ENCODE measurements at regions of chr12 and their contacts with region 1.

Region 1: GRCh38 chr12:31267966-31268365 is 58.0 kb downstream of the SINHCAF start:
- DNase-seq: no peak
- CTCF ChIP-seq: no peak

Region 2: DNA sequence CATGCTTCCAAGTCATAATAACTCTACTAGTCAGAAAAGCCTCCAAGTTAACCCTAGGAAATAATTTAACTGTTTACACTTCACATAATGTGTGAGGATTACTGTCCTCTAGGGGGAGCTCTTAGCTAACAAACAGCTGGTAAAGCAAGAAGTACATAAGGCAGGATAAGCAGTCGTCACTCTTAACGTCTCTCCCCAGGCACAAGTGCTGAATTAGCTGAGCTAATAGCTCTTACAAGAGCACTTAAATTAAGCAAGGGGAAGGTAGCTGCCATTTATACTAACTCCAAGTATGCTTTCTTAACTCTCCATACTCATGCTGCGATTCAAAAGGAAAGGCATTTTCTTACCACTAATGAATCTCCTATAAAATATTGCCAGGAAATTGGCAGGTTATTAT is 420.7 kb before region 1 on chr12:
- CTCF ChIA-PET with region 1: interaction called, 52 read pairs
- POLR2A ChIA-PET with region 1: no interaction called
- DNase-seq: no peak
- CTCF ChIP-seq: peak; percentile 64

Region 3: DNA sequence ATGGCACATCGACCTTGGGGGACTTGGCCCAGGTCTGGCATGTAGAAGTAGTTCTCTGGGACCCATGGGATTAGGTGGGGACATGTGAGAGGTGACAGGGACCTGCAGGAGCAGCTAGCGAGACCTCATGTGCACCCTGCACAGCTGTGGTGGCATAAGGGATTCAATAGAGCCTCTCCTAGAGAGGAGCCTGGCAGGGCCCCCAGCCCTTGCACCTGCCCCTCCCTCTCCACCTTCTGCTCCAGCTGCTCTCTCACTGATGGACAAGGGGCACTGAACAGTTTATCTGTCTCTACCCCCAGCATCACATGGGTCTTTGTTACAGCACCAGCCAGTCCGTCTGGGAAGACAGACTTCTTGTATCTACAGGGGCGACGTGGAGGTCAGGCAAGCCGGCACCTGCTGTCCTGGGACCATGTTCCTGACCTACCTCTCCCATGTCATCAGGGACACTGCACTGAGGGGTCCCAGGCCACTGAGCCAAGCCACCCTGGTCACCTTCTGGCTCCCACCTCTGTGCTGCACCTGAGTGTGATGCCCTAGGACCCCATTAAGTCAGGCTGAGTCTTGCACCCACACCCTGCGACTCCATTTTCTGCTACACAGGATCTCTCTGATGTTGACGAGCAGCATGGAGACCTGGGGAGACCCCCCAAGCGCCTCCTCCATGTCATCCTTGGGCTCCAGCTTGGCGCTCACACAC is 161.7 kb before region 1 on chr12:
- CTCF ChIA-PET with region 1: no interaction called
- POLR2A ChIA-PET with region 1: no interaction called
- DNase-seq: no peak
- CTCF ChIP-seq: no peak

Region 4: GRCh38 chr12:31238764-31239387 is 29.1 kb before region 1 on chr12:
- CTCF ChIA-PET with region 1: interaction called, 35 read pairs
- POLR2A ChIA-PET with region 1: no interaction called
- DNase-seq: peak; percentile 75
- CTCF ChIP-seq: peak; percentile 58

Region 5: GRCh38 chr12:31280183-31280582 is 12.2 kb after region 1 on chr12:
- CTCF ChIA-PET with region 1: interaction called, 38 read pairs
- POLR2A ChIA-PET with region 1: no interaction called
- DNase-seq: no peak
- CTCF ChIP-seq: no peak

Region 6: GRCh38 chr12:31297572-31298512 is 29.9 kb after region 1 on chr12:
- CTCF ChIA-PET with region 1: interaction called, 47 read pairs
- POLR2A ChIA-PET with region 1: no interaction called
- DNase-seq: no peak
- CTCF ChIP-seq: no peak

Region 7: DNA sequence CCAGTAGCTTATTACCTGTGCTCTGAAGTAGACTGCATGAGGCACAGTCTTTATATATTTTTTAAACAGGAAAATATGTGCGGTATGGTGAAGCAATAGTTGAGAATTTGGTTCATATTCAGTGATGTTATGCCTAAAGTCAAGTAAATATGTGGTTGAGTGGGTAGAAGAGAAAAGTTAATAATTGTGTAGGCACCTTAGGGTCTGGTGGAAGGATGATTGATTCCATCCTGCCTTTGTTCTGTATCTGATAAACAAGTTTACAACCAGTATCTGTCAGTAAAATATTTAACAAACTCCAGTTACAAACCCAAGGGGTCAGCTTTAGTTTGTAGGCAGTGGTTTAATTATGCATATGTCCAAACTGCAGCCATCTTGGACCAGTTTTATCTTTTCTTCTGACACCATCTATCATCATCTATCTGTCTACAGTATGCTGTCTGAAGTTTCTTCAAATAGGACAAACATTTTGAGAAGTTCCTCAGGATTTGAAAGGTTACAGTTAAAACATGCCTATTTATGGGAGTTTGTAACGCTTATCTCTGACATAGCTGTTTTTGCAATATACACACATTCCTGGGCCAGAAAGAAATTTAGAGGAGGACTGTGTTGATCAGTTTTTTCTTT is 47.2 kb after region 1 on chr12:
- CTCF ChIA-PET with region 1: interaction called, 11 read pairs
- POLR2A ChIA-PET with region 1: no interaction called
- DNase-seq: no peak
- CTCF ChIP-seq: no peak

Region 8: DNA sequence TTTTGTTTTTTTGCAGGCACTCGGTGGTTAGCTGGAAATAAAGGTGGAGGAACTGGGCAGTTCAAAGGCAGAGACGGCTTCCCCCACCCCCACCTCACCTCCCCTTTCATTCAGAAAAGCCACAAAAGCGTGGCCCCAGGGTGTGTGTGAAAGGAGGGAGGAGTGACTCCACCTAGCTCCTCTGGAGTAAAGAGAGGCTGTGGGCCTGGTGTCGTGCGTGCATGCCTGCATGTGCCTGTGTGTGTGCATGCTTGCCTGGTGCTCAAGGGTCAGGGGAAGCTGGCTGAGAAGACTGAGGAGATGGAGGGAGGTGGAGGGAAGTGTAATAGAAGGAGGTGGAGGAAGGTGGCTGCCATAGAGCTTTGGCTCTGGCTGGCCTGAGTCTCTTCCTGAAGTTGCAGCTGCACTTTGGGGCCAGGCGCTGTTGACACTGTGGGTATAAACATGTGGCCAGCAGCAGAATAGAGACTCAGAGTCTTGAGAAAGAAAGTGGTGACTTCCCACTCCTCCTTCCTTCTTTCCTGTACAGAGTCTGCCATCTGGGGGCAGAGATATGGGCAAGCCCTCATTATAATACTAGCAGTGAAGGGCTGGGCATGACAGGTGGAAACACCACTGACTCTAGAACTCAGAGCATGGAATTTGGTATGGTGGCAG is 94.9 kb after region 1 on chr12:
- CTCF ChIA-PET with region 1: interaction called, 17 read pairs
- POLR2A ChIA-PET with region 1: no interaction called
- DNase-seq: peak; percentile 63
- CTCF ChIP-seq: peak; percentile 43